ENCODE measurements at regions of chr16 and their contacts with region 1.

Region 1: DNA sequence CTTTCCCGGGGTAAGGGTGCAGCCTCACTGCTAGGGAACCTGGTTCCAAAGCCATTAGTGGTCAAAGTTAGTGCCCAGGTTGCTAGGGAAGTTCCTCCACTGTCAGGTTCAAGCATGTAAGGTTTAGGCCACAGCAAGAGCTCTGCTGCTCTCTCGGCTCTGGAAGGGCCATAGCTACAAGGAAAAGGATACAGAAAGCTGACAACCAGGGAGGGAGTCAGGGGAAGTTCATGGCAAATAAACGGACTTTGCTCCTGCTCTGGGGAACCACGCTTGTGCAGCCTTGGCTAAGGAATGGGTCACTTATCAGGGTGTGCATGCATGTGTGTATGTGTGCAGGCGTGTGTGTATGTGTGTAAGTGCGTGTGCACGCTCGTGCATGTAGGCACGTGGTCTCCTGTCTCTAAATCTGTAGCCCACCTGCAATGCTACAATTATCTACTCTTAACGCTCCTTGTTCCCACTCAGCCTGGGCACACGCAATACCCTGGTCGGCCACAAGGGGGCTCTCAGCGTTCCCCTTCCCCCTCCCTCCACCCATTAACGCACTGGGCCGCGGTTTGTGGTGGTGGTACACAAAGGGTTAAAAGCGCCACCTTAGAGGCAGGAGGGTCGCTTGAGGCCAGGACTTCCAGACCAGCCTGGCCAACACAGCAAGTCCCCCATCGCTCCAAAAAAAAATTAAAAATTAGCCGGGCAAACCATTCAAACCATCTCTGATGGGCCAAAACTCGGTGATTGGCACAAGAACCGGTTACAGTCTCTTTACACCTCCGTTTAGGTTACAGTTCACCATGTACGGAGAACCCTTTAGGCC is 48.4 kb upstream of the KDM8 start:
- DNase-seq: peak; percentile 76
- ATAC-seq: peak; percentile 76
- H3K4me3 Mint-ChIP-seq: no peak overlapping the region
- H3K27ac Mint-ChIP-seq: no peak overlapping the region
- H3K4me1 Mint-ChIP-seq: peaks cover 17% of the 10 kb centered on the region
- H3K27me3 Mint-ChIP-seq: no peaks in the 10 kb centered on the region

Region 2: DNA sequence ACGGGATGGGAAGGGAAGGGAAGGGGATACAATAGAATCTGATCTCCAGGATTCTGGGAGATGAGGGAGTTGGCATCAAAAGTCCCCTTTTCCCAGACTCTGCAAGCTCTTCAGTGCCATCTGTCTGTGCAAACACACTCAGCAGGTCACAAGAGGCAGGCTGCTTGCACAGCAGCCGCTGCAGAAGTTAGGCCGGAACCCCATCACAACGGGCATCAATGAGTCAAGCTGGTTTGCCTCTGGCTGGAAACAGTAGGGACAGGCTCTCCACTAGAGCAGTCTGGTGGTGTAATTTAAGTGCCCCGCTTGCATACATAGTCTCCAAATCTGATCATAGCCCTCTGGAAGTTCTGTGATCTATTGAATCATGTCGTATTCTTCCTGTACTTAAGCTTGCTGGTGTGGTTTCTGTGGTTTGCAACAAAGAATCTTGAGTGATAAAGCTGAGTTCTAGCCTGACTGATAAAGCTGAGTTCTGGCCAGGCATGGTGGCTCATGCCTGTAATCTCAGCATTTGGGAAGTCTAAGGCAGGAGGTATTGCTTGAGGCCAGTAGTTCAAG is 14.7 kb after region 1 on chr16:
- CTCF ChIA-PET with region 1: interaction called, 40 read pairs
- POLR2A ChIA-PET with region 1: interaction called, 4 read pairs
- DNase-seq: peak; percentile 84
- ATAC-seq: peak; percentile 86
- H3K4me3 Mint-ChIP-seq: peak overlapping the region; percentile 15
- H3K27ac Mint-ChIP-seq: peak overlapping the region; percentile 72
- H3K4me1 Mint-ChIP-seq: peaks cover 58% of the 10 kb centered on the region
- H3K27me3 Mint-ChIP-seq: peaks cover 4% of the 10 kb centered on the region